Activated naive CD4-positive, alpha-beta T cell treated with anti-CD3 and anti-CD28 coated beads for 36 hours (primary cell): ENCODE measurements at regions of chr9 and their contacts with region 1.

Region 1: GRCh38 chr9:99140685-99141314 is 35.9 kb downstream of the TGFBR1 start:
- DNase-seq: peak; percentile 67
- H3K4me3 Mint-ChIP-seq: no peak overlapping the region
- H3K27ac Mint-ChIP-seq: no peak overlapping the region
- H3K4me1 Mint-ChIP-seq: peaks cover 29% of the 10 kb centered on the region
- H3K27me3 Mint-ChIP-seq: no peaks in the 10 kb centered on the region

Region 2: GRCh38 chr9:98974994-98975712 is 165.6 kb before region 1 on chr9:
- CTCF ChIA-PET with region 1: interaction called, 36 read pairs
- intact Hi-C with region 1: loop called (anchors 1 kb)
- DNase-seq: peak; percentile 88
- H3K4me3 Mint-ChIP-seq: peak overlapping the region; percentile 7
- H3K27ac Mint-ChIP-seq: no peak overlapping the region
- H3K4me1 Mint-ChIP-seq: no peaks in the 10 kb centered on the region
- H3K27me3 Mint-ChIP-seq: peaks cover 5% of the 10 kb centered on the region

Region 3: DNA sequence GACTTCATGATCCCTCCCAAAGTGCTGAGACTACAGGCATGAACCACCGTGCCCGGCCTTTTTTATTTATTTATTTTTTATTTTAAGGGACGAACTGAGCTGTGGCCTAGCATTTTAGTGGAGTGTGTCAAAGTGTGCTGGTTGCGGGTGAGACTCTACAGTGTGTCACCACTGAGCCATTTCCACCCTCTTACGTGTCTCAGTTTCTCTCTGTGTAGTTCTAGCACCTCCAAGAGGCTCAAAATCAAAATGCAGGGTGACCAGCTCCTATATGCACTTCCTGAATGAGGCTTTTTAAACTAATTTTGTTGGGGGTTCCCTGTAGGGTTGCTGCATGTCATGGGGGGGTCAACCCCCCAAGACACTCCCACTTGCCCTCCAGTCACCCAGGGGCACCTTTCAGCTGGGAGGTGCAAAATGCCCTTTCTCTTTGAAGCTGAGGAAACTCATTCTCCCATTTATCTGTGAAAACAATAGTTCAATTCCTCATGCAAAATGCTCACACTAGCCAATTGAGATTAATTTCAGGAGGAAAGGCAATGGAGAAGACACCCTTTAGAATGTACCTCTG is 127.8 kb before region 1 on chr9:
- CTCF ChIA-PET with region 1: interaction called, 11 read pairs
- intact Hi-C with region 1: no loop called
- DNase-seq: peak; percentile 26
- H3K4me3 Mint-ChIP-seq: no peak overlapping the region
- H3K27ac Mint-ChIP-seq: peak overlapping the region; percentile 72
- H3K4me1 Mint-ChIP-seq: peaks cover 20% of the 10 kb centered on the region
- H3K27me3 Mint-ChIP-seq: no peaks in the 10 kb centered on the region

Region 4: DNA sequence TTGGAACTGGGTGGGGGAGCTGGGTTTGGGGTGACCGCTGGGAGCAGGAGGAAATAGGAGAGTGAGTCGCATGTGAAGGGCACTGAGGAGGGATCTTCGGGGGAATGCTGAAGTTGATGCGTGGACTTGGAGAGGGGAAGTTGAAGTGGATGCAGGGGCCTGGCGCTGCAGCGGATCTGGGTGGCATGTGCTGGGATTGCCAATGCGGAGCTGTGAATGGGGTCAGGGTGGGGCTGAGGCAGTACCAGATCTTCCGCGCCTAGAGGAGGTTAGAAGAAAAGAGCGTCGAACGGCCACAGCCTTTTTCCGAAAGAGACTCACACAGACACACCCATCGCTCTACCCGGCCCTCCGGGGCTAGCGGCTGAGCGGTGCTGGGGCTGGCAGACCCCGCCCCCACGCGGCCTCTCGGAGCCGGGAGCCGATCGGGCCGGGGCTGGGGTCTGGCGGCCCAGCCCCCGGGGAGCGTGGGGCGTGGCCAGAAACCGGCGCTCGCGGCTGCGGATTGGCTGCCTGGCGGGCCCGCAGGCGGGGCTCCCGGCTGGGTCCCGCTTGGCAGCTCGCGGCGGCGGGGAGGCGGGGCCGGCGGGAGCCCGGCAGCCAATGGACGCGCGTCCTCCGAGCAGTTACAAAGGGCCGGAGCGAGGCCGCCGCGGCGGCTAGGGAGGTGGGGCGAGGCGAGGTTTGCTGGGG is 36.2 kb before region 1 on chr9 and contains the start of gene TGFBR1:
- CTCF ChIA-PET with region 1: interaction called, 29 read pairs
- intact Hi-C with region 1: loop called (anchors 1 kb)
- DNase-seq: peak; percentile 89
- H3K4me3 Mint-ChIP-seq: peak within 1 kb of the TSS; percentile 89
- H3K27ac Mint-ChIP-seq: peak within 1 kb of the TSS; percentile 80
- H3K4me1 Mint-ChIP-seq: peaks cover 45% of the 10 kb centered on the region
- H3K27me3 Mint-ChIP-seq: no peaks in the 10 kb centered on the region
- total RNA-seq, gene TGFBR1: 13.7 to 16.9 TPM

Region 5: DNA sequence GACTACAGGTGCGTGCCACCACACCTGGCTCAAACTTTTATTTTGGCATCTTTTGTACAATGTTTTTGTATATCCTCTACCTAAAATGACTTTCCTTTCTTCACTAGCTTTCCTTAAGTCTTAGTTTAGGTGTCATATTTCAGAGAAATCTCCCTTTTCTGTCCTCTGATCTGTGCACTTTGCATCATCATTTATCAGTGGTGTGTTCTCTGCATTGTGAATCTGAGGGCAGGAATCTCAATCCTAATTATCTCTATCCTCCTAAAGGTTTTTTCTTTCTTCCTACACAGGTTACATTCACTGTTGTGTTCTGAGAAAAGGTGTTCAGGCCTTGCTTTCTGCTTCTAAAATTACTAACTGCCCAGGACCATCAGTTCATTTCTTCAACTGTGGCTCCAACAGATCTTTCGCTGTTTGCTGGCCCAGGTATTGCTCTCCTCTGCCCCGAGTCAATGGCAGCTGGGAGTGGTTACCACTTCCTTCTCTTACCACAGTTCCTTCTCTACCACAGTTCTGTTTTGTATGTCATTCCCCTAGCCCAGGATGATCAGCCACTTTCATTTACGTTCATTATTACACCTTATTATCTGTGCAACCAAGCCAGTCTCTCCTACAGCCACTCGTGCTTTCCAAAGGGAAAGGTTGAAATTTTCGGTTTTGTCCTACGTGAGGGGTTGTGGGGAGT is 21.9 kb before region 1 on chr9:
- CTCF ChIA-PET with region 1: interaction called, 17 read pairs
- intact Hi-C with region 1: loop called (anchors 2 kb)
- DNase-seq: peak; percentile 80
- H3K4me3 Mint-ChIP-seq: peak overlapping the region; percentile 70
- H3K27ac Mint-ChIP-seq: peak overlapping the region; percentile 90
- H3K4me1 Mint-ChIP-seq: peaks cover 85% of the 10 kb centered on the region
- H3K27me3 Mint-ChIP-seq: no peaks in the 10 kb centered on the region